ENCODE measurements at regions of chr11 and their contacts with region 1.

Region 1: GRCh38 chr11:6389921-6390724 is at the start of gene SMPD1:
- DNase-seq: peak; percentile 92 to 93
- H3K4me3 ChIP-seq: peak within 1 kb of the TSS; percentile 80
- H3K4me3 Mint-ChIP-seq: peak within 1 kb of the TSS; percentile 68
- H3K27ac Mint-ChIP-seq: peak within 1 kb of the TSS; percentile 27
- H3K4me1 ChIP-seq: peaks cover 24% of the 10 kb centered on the region
- H3K4me1 Mint-ChIP-seq: peaks cover 33% of the 10 kb centered on the region
- H3K27me3 ChIP-seq: no peaks in the 10 kb centered on the region
- H3K27me3 Mint-ChIP-seq: no peaks in the 10 kb centered on the region
- CTCF ChIP-seq: no peak
- total RNA-seq, gene SMPD1: 38.6 and 41.9 TPM in 2 replicates

Region 2: DNA sequence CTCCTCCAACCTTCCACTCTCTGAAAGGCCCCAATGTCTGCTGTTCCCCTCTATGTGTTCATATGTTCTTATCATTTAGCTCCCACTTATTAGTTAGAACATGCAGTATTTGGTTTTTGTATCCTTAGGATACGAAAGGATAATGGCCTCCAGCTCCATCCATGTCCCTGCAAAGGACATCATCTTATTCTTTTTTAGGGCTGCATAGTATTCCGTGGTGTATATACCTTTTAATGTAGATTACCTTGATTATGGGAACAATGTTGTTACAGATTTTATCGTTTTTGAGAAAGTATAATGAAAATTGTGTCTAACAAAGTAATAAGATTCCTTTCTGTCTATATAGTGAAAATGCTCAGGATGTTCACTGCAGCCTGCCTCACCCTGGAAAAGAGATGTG is 53.8 kb before region 1 on chr11:
- CTCF ChIA-PET with region 1: no interaction called
- POLR2A ChIA-PET with region 1: no interaction called
- intact Hi-C with region 1: no loop called
- DNase-seq: no peak
- H3K4me3 ChIP-seq: no peak overlapping the region
- H3K4me3 Mint-ChIP-seq: no peak overlapping the region
- H3K27ac Mint-ChIP-seq: no peak overlapping the region
- H3K4me1 ChIP-seq: no peaks in the 10 kb centered on the region
- H3K4me1 Mint-ChIP-seq: no peaks in the 10 kb centered on the region
- H3K27me3 ChIP-seq: no peaks in the 10 kb centered on the region
- H3K27me3 Mint-ChIP-seq: peaks cover 2% of the 10 kb centered on the region
- CTCF ChIP-seq: no peak

Region 3: DNA sequence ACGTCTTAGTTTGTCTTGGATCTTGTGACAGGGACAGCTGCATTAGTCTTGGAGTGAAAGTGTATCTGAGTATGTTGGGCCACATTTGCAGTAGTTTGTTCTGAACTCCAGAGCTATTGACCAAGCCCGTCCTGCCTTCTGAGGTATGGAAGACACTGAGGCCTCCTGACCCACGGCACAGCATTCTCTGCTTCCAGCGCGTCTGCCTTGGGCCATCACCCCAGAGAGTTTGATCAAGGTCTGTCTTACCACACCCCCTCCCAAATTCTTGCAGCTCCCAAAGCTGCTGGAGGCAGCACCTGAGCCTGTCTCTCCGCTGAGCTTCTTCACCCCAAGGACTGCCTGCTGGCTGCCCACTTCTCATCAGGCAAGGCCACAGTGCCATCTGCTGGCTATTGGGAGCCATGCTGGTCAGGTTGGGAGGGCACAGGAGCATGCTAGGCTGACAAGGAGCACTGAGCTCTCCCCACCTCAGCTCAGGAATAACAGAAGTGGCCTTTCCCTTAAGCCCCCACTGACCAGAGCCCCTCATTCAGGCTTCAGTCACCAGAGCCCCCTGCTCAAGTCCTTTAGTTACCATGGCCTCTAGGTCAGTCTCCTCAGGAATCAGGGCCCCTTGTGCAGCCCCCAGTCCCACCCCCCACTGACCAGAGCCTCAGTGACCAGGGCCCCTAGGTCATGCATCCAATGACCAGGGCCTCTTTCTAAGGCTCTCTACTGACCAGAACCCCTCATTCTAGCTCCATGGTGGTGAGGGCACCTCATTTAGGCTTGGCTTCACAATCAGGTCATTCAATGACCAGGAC is 27.0 kb before region 1 on chr11:
- CTCF ChIA-PET with region 1: interaction called, 16 read pairs
- POLR2A ChIA-PET with region 1: no interaction called
- intact Hi-C with region 1: no loop called
- DNase-seq: peak; percentile 86 to 87
- H3K4me3 ChIP-seq: no peak overlapping the region
- H3K4me3 Mint-ChIP-seq: no peak overlapping the region
- H3K27ac Mint-ChIP-seq: no peak overlapping the region
- H3K4me1 ChIP-seq: peaks cover 16% of the 10 kb centered on the region; the same call in 1 of the 2 replicates
- H3K4me1 Mint-ChIP-seq: no peaks in the 10 kb centered on the region
- H3K27me3 ChIP-seq: no peaks in the 10 kb centered on the region
- H3K27me3 Mint-ChIP-seq: no peaks in the 10 kb centered on the region
- CTCF ChIP-seq: peak; percentile 79 to 97

Region 4: GRCh38 chr11:6419009-6419631 is 29.0 kb after region 1 on chr11 and contains the start of gene APBB1:
- CTCF ChIA-PET with region 1: interaction called, 3 read pairs
- POLR2A ChIA-PET with region 1: interaction called, 8 read pairs
- intact Hi-C with region 1: loop called (anchors 1 kb)
- DNase-seq: peak in 1 of 2 experiments; percentile 75
- H3K4me3 ChIP-seq: peak within 1 kb of the TSS; percentile 81
- H3K4me3 Mint-ChIP-seq: no peak within 1 kb of the TSS
- H3K27ac Mint-ChIP-seq: no peak within 1 kb of the TSS
- H3K4me1 ChIP-seq: peaks cover 14% of the 10 kb centered on the region
- H3K4me1 Mint-ChIP-seq: no peaks in the 10 kb centered on the region
- H3K27me3 ChIP-seq: no peaks in the 10 kb centered on the region
- H3K27me3 Mint-ChIP-seq: peaks cover 2% of the 10 kb centered on the region
- CTCF ChIP-seq: peak in 1 of 2 experiments; percentile 13
- total RNA-seq, gene APBB1: 37.8 and 39.0 TPM in 2 replicates

Region 5: GRCh38 chr11:6443269-6444003 is 53.3 kb after region 1 on chr11:
- CTCF ChIA-PET with region 1: interaction called, 9 read pairs
- POLR2A ChIA-PET with region 1: no interaction called
- intact Hi-C with region 1: loop called (anchors 2 kb)
- DNase-seq: peak; percentile 66 to 68
- H3K4me3 ChIP-seq: no peak overlapping the region
- H3K4me3 Mint-ChIP-seq: no peak overlapping the region
- H3K27ac Mint-ChIP-seq: no peak overlapping the region
- H3K4me1 ChIP-seq: peaks cover 29% of the 10 kb centered on the region
- H3K4me1 Mint-ChIP-seq: peaks cover 7% of the 10 kb centered on the region
- H3K27me3 ChIP-seq: no peaks in the 10 kb centered on the region
- H3K27me3 Mint-ChIP-seq: no peaks in the 10 kb centered on the region
- CTCF ChIP-seq: peak; percentile 79 to 85

Region 6: DNA sequence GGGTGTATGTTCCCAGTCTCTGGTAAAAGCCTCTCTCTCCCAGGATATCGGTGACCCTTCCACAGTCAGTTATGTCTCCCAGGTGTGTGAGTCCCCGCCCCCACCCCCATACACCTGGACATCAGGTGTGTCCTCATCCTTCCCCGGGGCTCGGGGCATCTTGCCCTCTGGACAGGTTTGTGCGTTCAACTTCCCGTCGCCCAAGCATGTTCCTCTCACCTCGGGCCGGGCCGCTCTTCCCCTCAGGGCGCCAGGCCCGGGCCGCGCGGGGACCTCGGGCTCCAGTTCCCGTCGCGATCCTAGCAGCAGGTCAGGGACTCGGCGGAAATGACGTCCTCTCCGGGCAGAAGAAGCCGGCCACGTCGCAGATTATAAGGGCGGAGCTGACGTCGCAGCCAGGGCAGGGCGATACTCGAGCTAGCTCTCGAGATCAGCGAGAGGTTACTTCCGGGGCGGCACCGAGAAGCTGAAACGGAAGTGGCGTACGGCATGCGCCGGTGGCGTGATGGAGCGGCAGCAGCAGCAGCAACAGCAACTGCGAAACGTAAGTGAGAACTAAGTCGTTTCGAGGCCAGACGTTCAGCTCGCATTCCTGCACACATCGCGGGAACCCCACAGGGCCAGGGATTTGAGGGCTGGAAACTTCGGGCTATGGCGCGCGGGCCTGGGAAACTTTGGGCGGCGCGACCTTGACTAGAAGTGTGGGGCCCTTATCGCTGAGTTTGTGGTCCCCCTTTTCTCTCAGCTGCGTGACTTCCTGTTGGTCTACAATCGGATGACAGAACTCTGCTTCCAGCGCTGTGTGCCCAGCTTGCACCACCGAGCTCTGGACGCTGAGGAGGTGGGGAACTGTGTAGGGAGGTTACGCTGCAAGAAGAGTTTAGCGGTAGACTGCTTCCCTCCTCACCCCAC is 91.1 kb after region 1 on chr11 and contains the starts of genes ARFIP2 and TIMM10B:
- CTCF ChIA-PET with region 1: interaction called, 7 read pairs
- POLR2A ChIA-PET with region 1: interaction called, 17 read pairs
- intact Hi-C with region 1: no loop called
- DNase-seq: peak; percentile 97 to 98
- H3K4me3 ChIP-seq: peak within 1 kb of the TSS; percentile 88
- H3K4me3 Mint-ChIP-seq: peak within 1 kb of the TSS; percentile 97
- H3K27ac Mint-ChIP-seq: peak within 1 kb of the TSS; percentile 99
- H3K4me1 ChIP-seq: peaks cover 42% of the 10 kb centered on the region
- H3K4me1 Mint-ChIP-seq: peaks cover 23% of the 10 kb centered on the region
- H3K27me3 ChIP-seq: no peaks in the 10 kb centered on the region
- H3K27me3 Mint-ChIP-seq: no peaks in the 10 kb centered on the region
- CTCF ChIP-seq: no peak
- total RNA-seq, gene ARFIP2: 94.6 and 100 TPM in 2 replicates
- total RNA-seq, gene TIMM10B: 52.4 and 53.1 TPM in 2 replicates

Measured in Caco-2 (cell line).